ENCODE measurements at regions of chr10 and their contacts with region 1.

Region 1: DNA sequence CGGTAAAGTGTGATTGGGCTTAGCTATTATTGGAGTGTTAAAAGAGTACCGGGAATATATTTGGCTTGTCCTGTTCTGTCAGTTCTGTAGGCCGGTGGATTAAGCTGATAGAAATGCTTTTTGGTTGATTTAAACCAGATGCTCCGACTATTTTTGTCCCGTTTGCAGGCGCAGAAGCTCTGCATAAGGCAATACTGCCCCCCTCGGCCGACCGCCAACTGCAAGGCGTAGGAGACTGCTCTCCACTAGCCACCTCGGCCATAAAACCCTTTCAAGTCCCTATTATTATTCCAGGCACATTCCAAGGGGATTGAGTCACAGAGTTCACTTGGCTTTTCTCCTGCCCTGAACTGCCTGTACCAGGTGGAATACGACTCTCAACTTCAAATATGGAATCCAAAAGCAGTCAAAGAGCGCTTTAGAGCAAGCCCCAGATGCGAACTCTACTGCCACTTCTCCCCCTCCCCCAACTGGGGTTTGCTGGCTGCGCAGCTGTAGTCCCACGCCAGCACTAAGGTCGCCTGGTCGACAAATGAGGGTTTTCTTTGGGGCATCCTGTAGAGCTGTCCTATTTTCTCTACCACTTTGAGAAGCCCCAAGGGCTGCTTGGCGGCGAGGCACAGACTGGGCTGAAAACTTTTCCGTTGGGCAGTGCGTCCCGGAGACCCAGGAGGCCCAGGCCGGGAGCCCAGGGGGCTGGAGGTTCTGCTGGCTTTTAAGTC is 108.3 kb downstream of the REEP3 start:
- DNase-seq: peak; percentile 67
- ATAC-seq: peak; percentile 60
- H3K4me3 Mint-ChIP-seq: peak overlapping the region; percentile 91
- H3K27ac Mint-ChIP-seq: peak overlapping the region; percentile 94
- H3K4me1 Mint-ChIP-seq: peaks cover 28% of the 10 kb centered on the region
- H3K27me3 Mint-ChIP-seq: no peaks in the 10 kb centered on the region
- CTCF ChIP-seq: peak; percentile 38

Region 2: DNA sequence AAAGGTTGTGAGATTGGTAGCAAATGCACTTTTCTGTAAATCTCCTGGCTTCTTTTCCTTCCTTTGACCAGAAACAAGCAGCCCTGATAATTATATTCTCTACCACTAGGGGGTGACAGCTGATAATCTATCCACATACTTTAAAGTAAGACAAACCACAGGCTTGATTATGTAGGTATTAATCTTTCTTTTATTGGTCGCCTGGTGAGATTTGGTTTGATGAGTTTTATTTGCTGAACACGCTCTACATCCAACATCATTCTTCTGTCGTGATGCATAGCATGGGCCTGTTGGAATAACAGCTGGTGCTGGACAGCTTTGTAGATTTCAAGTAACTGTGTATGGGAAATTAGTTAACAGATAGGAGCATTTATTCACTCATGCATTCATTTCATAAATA is 1191.8 kb before region 1 on chr10:
- CTCF ChIA-PET with region 1: no interaction called
- POLR2A ChIA-PET with region 1: no interaction called
- intact Hi-C with region 1: loop called (anchors 5 kb)
- DNase-seq: no peak
- ATAC-seq: peak; percentile 70
- H3K4me3 Mint-ChIP-seq: no peak overlapping the region
- H3K27ac Mint-ChIP-seq: no peak overlapping the region
- H3K4me1 Mint-ChIP-seq: peaks cover 2% of the 10 kb centered on the region
- H3K27me3 Mint-ChIP-seq: no peaks in the 10 kb centered on the region
- CTCF ChIP-seq: peak; percentile 90

Region 3: DNA sequence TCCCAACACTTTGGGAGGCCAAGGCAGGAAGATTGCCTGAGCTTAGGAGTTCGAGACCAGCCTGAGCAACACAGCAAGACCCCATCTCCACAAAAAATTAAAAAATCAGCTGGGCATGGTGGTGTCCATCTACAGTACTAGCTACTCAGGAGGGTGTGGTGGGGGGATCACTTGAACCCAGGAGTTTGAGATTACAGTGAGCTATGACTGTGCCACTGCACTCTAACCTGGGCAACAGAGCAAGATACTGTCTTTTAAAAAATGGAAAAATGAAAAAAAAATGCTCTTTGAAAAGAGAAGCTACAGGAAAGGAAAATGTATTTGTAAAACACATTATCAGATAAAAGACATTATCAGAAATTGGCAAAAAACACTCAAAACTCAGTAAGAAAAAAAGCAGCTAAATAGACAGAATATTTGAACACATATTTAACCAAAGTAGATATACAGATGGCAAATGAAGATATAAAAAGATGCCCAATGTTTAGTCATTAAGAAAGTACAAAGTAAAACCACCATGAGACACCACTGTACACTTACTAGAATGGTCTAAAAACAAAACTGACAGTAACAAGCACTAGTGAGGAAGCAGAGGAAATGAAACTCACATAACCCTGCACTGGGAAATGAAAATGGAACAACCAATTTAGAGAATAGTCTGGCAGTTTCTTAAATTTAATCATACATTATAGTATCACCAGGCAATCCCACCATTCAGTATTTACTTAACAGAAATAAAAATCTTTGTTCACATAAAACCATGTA is 455.9 kb before region 1 on chr10:
- CTCF ChIA-PET with region 1: interaction called, 85 read pairs
- POLR2A ChIA-PET with region 1: interaction called, 4 read pairs
- intact Hi-C with region 1: loop called (anchors 1 kb)
- DNase-seq: no peak
- ATAC-seq: peak; percentile 99
- H3K4me3 Mint-ChIP-seq: peak overlapping the region; percentile 63
- H3K27ac Mint-ChIP-seq: peak overlapping the region; percentile 82
- H3K4me1 Mint-ChIP-seq: peaks cover 48% of the 10 kb centered on the region
- H3K27me3 Mint-ChIP-seq: no peaks in the 10 kb centered on the region
- CTCF ChIP-seq: no peak

Region 4: GRCh38 chr10:63261496-63261895 is 368.0 kb before region 1 on chr10:
- CTCF ChIA-PET with region 1: interaction called, 5 read pairs
- POLR2A ChIA-PET with region 1: interaction called, 35 read pairs
- intact Hi-C with region 1: no loop called
- DNase-seq: no peak
- ATAC-seq: peak; percentile 26
- H3K4me3 Mint-ChIP-seq: peak overlapping the region; percentile 82
- H3K27ac Mint-ChIP-seq: peak overlapping the region; percentile 91
- H3K4me1 Mint-ChIP-seq: peaks cover 78% of the 10 kb centered on the region
- H3K27me3 Mint-ChIP-seq: no peaks in the 10 kb centered on the region
- CTCF ChIP-seq: no peak

Region 5: GRCh38 chr10:63465293-63466143 is 164.0 kb before region 1 on chr10 and contains the start of gene JMJD1C:
- CTCF ChIA-PET with region 1: interaction called, 4 read pairs
- POLR2A ChIA-PET with region 1: interaction called, 15 read pairs
- intact Hi-C with region 1: loop called (anchors 1 kb)
- DNase-seq: peak; percentile 74
- ATAC-seq: peak; percentile 74
- H3K4me3 Mint-ChIP-seq: peak within 1 kb of the TSS; percentile 97
- H3K27ac Mint-ChIP-seq: peak within 1 kb of the TSS; percentile 92
- H3K4me1 Mint-ChIP-seq: peaks cover 20% of the 10 kb centered on the region
- H3K27me3 Mint-ChIP-seq: no peaks in the 10 kb centered on the region
- CTCF ChIP-seq: no peak
- total RNA-seq, gene JMJD1C: 167 and 176 TPM in 2 replicates

Region 6: DNA sequence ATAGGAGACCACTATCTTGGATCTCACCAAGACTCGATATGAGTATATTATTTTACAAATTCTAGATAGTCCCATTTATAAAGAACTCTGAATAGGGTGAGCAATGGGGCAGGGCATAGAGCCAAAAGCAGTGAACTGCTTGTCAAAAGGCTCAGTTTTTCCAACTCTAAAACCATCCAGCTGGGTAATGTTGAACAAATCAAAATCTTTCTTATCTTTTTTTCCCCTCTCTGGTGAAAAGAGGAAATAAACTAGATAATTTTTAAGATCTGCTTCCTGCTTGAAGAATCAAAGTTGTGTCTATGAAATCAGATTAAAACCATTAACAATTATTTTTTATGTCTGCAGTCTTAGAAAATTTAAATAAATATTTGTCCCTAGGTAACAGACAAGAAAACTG is 70.3 kb after region 1 on chr10:
- CTCF ChIA-PET with region 1: interaction called, 5 read pairs
- POLR2A ChIA-PET with region 1: interaction called, 3 read pairs
- intact Hi-C with region 1: loop called (anchors 2 kb)
- DNase-seq: no peak
- ATAC-seq: no peak
- H3K4me3 Mint-ChIP-seq: no peak overlapping the region
- H3K27ac Mint-ChIP-seq: peak overlapping the region; percentile 57
- H3K4me1 Mint-ChIP-seq: peaks cover 49% of the 10 kb centered on the region
- H3K27me3 Mint-ChIP-seq: no peaks in the 10 kb centered on the region
- CTCF ChIP-seq: no peak